GM12878 (cell line): ENCODE measurements at regions of chr19 and their contacts with region 1.

Region 1: GRCh38 chr19:51660975-51661600 is 14.5 kb upstream of the SIGLEC14 start:
- DNase-seq: no peak
- ATAC-seq: peak; percentile 78
- H3K4me3 ChIP-seq: no peak overlapping the region
- H3K27ac ChIP-seq: no peak overlapping the region
- H3K4me1 ChIP-seq: no peaks in the 10 kb centered on the region
- H3K27me3 ChIP-seq: no peaks in the 10 kb centered on the region
- CTCF ChIP-seq: peak; percentile 58 to 63 (median 63)
- EP300 ChIP-seq: no peak
- POLR2A ChIP-seq: no peak
- RAD21 ChIP-seq: peak; percentile 88

Region 2: DNA sequence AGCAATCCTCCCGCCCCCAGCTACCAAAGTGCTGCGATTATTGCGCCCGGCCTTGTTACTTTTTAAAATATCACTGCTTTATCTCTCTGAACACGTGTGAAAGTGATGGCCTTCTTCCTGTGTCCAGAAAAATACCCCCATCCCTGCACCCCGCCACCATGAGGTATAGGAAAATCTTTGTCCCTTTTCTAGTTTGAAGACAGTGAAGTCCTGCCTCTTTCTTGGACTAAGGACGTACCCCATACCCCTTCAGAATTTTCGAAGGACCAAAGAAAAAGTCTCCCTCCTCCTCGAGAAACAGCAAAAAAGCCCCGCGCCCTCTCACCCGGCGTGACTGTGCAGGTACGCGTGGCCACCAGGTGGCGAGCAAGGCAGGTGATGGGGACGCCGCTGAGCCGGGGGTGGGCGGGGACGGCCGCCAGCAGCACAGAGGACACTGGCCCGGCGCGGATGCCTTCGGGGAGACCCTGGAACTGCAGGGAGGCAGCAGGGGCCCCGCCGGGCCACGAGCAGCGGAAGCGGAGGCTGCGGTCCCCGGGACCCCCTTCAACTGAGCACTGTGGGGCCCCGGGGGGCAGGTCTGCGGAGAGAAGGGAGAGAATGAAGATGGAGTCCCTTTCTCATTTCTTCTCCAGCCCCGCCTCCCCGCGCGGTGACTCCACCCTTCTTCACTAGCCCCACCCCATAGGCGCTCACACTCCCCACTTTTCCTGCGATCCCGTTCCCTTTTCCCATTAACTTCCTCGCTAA is 322.4 kb before region 1 on chr19:
- CTCF ChIA-PET with region 1: interaction called, 5 read pairs
- POLR2A ChIA-PET with region 1: interaction called, 4 read pairs
- RAD21 ChIA-PET with region 1: interaction called, 8 read pairs
- SMC1A ChIA-PET with region 1: no interaction called
- in situ Hi-C with region 1: loop called (anchors 5 kb)
- intact Hi-C with region 1: loop called (anchors 10 kb)
- DNase-seq: peak; percentile 24
- ATAC-seq: peak; percentile 91
- H3K4me3 ChIP-seq: peak overlapping the region; percentile 60
- H3K27ac ChIP-seq: peak overlapping the region; percentile 22
- H3K4me1 ChIP-seq: peaks cover 5% of the 10 kb centered on the region
- H3K27me3 ChIP-seq: no peaks in the 10 kb centered on the region
- CTCF ChIP-seq: peak; percentile 83 to 93 (median 88)
- EP300 ChIP-seq: no peak
- POLR2A ChIP-seq: peak; percentile 26; the same call in 1 of the 2 replicates
- RAD21 ChIP-seq: peak; percentile 84

Region 3: DNA sequence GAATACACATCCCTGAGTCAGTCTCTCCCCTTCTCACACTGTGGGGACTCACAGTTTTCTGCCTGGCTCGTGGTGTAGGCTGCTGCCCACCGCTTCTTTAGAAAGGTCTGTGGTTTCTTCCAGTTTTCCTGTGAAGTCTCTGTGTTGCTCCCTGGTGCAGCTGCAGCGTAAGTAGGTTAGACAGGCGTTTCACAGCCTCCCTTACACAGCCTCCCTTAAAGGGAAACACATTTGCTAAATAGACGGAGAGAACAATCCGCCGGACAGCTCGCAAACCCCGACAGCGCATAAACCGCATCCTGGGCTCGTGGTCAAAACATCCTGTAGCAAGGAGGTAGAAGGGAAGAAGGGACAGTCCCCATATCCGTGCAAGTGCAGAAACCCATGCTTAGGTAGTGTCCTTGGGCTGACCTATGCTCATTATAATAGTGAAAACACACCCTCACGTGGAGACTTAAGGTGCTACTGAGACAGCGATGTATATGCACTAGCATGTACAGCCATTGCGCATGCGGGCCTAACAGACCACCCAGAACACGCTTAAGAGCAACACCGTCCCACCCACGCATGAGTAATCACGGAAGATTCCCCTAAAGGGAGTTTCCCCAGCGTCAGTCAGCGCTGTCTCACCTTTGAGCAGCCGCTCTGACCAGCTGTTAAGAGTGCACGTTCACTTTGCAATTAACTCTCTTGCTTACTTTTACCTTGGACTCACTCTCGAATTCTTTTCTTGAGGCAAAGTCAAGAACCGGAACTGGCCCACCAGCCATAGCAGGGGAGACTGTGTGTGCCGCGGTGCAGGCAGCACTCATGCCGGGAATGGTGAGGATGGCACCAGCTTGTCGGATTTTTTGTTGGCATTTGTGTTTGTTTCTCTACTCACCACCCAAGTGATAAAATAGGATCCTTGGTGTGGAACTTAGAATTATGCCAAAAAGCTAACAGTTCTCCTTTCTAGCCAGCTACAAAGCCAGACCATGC is 219.4 kb before region 1 on chr19:
- CTCF ChIA-PET with region 1: interaction called, 8 read pairs
- POLR2A ChIA-PET with region 1: no interaction called
- RAD21 ChIA-PET with region 1: interaction called, 5 read pairs
- SMC1A ChIA-PET with region 1: interaction called, 17 read pairs
- in situ Hi-C with region 1: no loop called
- intact Hi-C with region 1: no loop called
- DNase-seq: peak; percentile 91
- ATAC-seq: peak; percentile 94
- H3K4me3 ChIP-seq: peak overlapping the region; percentile 49; the same call in 1 of the 2 replicates
- H3K27ac ChIP-seq: no peak overlapping the region
- H3K4me1 ChIP-seq: peaks cover 27% of the 10 kb centered on the region
- H3K27me3 ChIP-seq: peaks cover 0 to 4% of the 10 kb centered on the region in 2 experiments; a peak in 2 of 4 replicates
- CTCF ChIP-seq: peak in 2 of 3 experiments; percentile 4 to 16; a peak in 2 of 6 replicates
- EP300 ChIP-seq: peak; percentile 56 to 73
- POLR2A ChIP-seq: no peak
- RAD21 ChIP-seq: no peak

Region 4: GRCh38 chr19:51507640-51508058 is 153.4 kb before region 1 on chr19:
- CTCF ChIA-PET with region 1: interaction called, 111 read pairs
- POLR2A ChIA-PET with region 1: no interaction called
- RAD21 ChIA-PET with region 1: interaction called, 5 read pairs
- SMC1A ChIA-PET with region 1: interaction called, 8 read pairs
- in situ Hi-C with region 1: no loop called
- intact Hi-C with region 1: loop called (anchors 5 kb)
- DNase-seq: no peak
- ATAC-seq: no peak
- H3K4me3 ChIP-seq: no peak overlapping the region
- H3K27ac ChIP-seq: no peak overlapping the region
- H3K4me1 ChIP-seq: no peaks in the 10 kb centered on the region
- H3K27me3 ChIP-seq: peaks cover 0 to 4% of the 10 kb centered on the region in 2 experiments; a peak in 1 of 4 replicates
- CTCF ChIP-seq: no peak
- EP300 ChIP-seq: no peak
- POLR2A ChIP-seq: no peak
- RAD21 ChIP-seq: no peak

Region 5: GRCh38 chr19:51570962-51571575 is 90.0 kb before region 1 on chr19 and contains the start of gene ZNF175:
- CTCF ChIA-PET with region 1: interaction called, 9 read pairs
- POLR2A ChIA-PET with region 1: no interaction called
- RAD21 ChIA-PET with region 1: interaction called, 14 read pairs
- SMC1A ChIA-PET with region 1: interaction called, 3 read pairs
- in situ Hi-C with region 1: no loop called
- intact Hi-C with region 1: no loop called
- DNase-seq: peak; percentile 97
- ATAC-seq: peak; percentile 96
- H3K4me3 ChIP-seq: peak within 1 kb of the TSS; percentile 89
- H3K27ac ChIP-seq: peak within 1 kb of the TSS; percentile 49
- H3K4me1 ChIP-seq: peaks cover 8% of the 10 kb centered on the region; the same call in 1 of the 2 replicates
- H3K27me3 ChIP-seq: no peaks in the 10 kb centered on the region
- CTCF ChIP-seq: no peak
- EP300 ChIP-seq: no peak
- POLR2A ChIP-seq: peak; percentile 48; the same call in 1 of the 2 replicates
- RAD21 ChIP-seq: no peak
- polyA plus RNA-seq, gene ZNF175: 1.5 to 1.8 TPM

Region 6: DNA sequence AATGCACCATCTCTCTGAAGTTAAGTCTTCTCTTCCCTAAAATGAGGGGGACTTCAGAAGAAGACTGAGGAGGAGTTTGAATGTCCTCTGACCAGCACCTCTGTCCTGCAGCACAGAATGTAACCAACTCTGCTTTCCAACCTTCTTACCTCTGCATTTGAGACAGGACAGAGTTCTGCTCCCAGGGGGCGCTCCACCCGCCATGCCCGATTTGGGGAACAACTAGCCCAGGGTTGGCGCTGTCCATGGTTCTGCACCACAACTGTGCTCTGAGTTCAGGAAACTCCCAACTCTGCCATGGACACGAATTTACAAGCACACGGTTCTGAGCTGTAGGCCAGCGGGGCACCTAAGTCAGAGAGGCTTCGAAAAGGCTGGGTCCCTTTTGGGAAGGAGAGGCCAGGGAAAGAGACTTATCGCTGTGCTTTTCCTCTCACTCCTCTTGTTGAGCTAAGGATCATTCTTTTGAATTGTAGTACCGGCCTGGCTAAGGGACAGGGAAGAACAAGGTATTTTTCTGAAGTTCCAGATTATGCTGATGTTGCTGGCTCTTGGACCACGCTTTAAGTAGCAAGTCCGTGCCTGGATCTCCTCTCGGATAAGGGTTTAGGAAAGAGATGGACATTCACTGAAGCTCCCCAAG is 53.0 kb before region 1 on chr19:
- CTCF ChIA-PET with region 1: interaction called, 24 read pairs
- POLR2A ChIA-PET with region 1: no interaction called
- RAD21 ChIA-PET with region 1: interaction called, 12 read pairs
- SMC1A ChIA-PET with region 1: interaction called, 13 read pairs
- in situ Hi-C with region 1: no loop called
- intact Hi-C with region 1: loop called (anchors 2 kb)
- DNase-seq: no peak
- ATAC-seq: peak; percentile 46
- H3K4me3 ChIP-seq: no peak overlapping the region
- H3K27ac ChIP-seq: peak overlapping the region; percentile 84
- H3K4me1 ChIP-seq: peaks cover 30% of the 10 kb centered on the region
- H3K27me3 ChIP-seq: no peaks in the 10 kb centered on the region
- CTCF ChIP-seq: peak; percentile 59 to 64 (median 63)
- EP300 ChIP-seq: no peak
- POLR2A ChIP-seq: no peak
- RAD21 ChIP-seq: peak; percentile 67

Region 7: DNA sequence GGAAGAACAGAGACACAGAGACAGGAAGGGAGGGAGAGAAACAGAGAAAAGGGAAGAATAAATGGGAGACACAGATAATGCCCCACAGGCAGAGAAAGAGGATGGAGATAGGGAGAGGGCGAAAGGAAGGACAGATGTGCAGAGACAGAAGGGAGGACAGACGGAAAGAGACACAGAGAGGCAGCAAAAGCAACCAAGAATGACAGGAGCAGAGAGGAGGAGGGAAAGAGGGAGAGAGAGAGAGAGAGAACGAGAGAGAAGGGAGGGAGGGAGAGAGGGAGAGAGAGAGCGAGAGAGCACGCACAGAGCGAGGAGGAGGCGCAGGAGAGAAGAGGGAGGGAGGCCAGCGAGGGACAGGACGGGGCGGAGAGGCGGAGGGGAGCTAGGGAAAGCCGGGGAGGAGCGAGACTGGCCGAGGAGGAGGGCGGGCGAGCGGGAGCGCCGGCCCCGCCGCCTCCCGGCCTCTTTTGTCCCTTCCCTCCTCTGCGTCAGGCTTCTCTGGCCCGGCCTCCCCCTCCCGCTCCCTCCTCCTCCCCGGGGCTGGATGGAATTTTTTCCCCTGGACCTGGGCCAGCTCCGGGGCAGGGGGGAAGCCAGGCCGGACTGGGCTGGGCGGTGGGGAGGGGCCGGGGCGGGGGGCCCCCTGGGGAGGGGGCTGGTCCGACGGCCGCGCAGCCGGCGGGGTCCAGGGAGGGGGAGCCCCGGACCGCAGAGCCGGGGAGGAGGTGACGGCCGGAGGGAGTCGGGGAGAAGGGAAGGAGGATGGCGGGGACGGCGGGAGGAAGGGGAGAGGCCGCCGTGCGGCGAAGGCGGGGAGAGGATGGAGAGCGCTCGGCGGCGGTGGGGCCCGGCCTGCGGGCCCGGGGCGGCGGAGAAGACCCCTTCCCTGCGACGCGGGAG is 27.8 kb after region 1 on chr19:
- CTCF ChIA-PET with region 1: no interaction called
- POLR2A ChIA-PET with region 1: no interaction called
- RAD21 ChIA-PET with region 1: no interaction called
- SMC1A ChIA-PET with region 1: no interaction called
- in situ Hi-C with region 1: no loop called
- intact Hi-C with region 1: no loop called
- DNase-seq: no peak
- ATAC-seq: no peak
- H3K4me3 ChIP-seq: no peak overlapping the region
- H3K27ac ChIP-seq: no peak overlapping the region
- H3K4me1 ChIP-seq: no peaks in the 10 kb centered on the region
- H3K27me3 ChIP-seq: peaks cover 3 to 9% of the 10 kb centered on the region in 2 experiments
- CTCF ChIP-seq: no peak
- EP300 ChIP-seq: no peak
- POLR2A ChIP-seq: no peak
- RAD21 ChIP-seq: no peak

Region 8: DNA sequence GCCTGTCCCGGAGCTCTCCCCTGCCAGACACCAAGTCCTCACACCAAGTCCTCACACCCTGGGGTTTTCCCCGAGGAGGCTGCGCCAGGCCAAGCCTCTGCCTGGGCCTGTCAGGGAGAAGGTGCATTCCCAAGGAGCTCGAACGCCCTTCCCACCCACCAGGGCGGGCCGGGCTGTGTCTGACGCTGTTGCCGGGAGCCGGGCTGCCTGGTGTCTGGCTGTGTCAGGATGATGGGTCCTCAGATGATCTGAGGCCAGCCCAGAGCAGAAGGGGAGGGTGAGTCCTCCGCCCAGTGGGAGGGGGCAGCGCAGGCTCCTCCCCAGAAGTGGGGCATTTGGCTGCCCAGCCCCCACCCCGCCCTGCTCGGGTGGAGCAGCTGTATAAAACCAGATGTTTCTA is 65.0 kb after region 1 on chr19:
- CTCF ChIA-PET with region 1: no interaction called
- POLR2A ChIA-PET with region 1: no interaction called
- RAD21 ChIA-PET with region 1: no interaction called
- SMC1A ChIA-PET with region 1: no interaction called
- in situ Hi-C with region 1: no loop called
- intact Hi-C with region 1: no loop called
- DNase-seq: no peak
- ATAC-seq: no peak
- H3K4me3 ChIP-seq: no peak overlapping the region
- H3K27ac ChIP-seq: no peak overlapping the region
- H3K4me1 ChIP-seq: no peaks in the 10 kb centered on the region
- H3K27me3 ChIP-seq: no peaks in the 10 kb centered on the region
- CTCF ChIP-seq: no peak
- EP300 ChIP-seq: no peak
- POLR2A ChIP-seq: no peak
- RAD21 ChIP-seq: no peak

Region 9: GRCh38 chr19:51777570-51778462 is 116.7 kb after region 1 on chr19:
- CTCF ChIA-PET with region 1: interaction called, 12 read pairs
- POLR2A ChIA-PET with region 1: no interaction called
- RAD21 ChIA-PET with region 1: interaction called, 7 read pairs
- SMC1A ChIA-PET with region 1: interaction called, 3 read pairs
- in situ Hi-C with region 1: no loop called
- intact Hi-C with region 1: no loop called
- DNase-seq: no peak
- ATAC-seq: peak; percentile 63
- H3K4me3 ChIP-seq: no peak overlapping the region
- H3K27ac ChIP-seq: no peak overlapping the region
- H3K4me1 ChIP-seq: no peaks in the 10 kb centered on the region; the same call in 1 of the 2 replicates
- H3K27me3 ChIP-seq: no peaks in the 10 kb centered on the region
- CTCF ChIP-seq: peak; percentile 50 to 63 (median 55); a peak in 4 of 6 replicates
- EP300 ChIP-seq: no peak
- POLR2A ChIP-seq: no peak
- RAD21 ChIP-seq: peak; percentile 66